CD4-positive, alpha-beta memory T cell (primary cell): ENCODE measurements at regions of chr10 and their contacts with region 1.

Region 1: DNA sequence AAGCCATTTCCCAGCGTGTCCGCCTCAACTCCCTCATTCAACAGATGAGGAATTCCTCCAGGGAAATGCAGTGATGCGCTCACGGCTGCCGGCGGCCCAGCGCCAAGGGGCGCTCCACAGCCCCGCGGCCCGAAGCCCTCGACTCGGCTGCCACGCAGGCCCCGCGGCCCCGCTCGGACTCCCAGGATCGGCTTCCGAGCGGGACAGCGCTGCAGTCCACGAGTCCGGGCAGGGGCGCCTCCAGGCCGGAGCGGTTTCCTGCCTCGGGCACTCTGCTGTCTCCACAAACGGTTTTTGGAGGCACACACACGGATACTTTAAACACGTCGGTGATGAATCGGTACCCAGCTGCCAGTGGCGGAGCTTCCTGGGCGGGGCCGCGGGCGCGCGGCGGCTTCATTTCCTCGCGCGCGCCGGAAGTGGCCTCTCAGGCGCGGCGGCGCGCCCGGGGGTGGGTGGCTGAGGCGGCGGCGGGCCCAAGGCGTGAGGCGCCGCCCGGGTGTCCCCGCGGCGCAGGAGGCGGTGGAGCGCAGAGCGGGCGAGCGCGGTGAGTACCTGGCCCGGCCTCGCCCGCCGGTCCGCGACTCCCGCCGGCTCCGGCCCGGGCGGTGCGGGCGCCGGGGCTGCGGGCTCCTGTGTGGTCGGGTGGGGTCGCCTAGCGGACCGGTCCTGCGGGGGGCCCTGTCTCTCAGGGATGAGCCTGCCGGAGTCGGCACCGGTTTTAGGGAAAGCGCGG is at the start of gene CSGALNACT2:
- DNase-seq: peak; percentile 88 to 91 (median 90)
- H3K4me3 ChIP-seq: peak within 1 kb of the TSS; percentile 67 to 92
- H3K4me3 Mint-ChIP-seq: peak within 1 kb of the TSS; percentile 91 to 100 (median 98)
- H3K27ac ChIP-seq: peak within 1 kb of the TSS; percentile 89
- H3K27ac Mint-ChIP-seq: peak within 1 kb of the TSS; percentile 97 to 100 (median 99)
- H3K4me1 ChIP-seq: peaks cover 49% of the 10 kb centered on the region
- H3K4me1 Mint-ChIP-seq: peaks cover 33 to 56% (median 43%) of the 10 kb centered on the region in 4 donors
- H3K27me3 ChIP-seq: no peaks in the 10 kb centered on the region
- H3K27me3 Mint-ChIP-seq: no peaks in the 10 kb centered on the region
- total RNA-seq, gene CSGALNACT2: 45.3 to 48.2 TPM

Region 2: DNA sequence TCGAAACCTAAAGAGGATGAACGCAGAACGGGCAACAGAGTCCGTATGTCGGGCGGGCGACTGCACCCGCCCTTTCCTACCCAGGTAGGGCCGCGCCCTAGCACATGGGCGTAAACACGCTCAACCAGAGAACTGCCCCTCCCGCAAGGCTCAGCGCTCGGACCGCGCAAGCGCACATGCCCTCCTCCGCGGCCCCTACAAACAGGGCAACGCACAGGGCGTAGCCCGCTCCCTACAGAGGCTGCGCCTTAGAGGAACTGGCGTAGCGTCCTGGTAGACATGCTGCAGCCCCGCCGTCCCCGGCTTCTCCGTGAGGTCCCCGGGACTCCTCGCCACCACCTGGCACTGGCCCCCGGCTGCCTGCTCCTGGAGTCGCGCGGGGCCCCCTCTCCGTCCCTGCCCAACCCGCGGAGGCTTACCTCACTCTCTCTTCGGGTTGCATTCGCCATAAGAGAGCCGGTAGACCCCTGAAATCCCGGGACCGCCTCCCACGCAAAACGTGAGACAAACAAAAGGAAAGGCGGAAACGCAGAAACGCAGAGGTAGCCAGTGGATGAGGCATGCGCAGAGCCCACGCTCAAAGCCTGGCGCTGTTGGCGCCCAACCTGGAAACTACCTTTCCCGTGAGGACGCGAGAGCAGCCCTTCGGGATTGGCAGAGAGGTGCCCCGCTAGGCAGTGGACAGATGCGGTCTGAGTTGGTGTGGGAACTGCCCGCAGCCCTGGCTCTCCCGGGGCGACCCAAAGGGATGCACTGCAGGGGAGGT is 500.0 kb before region 1 on chr10 and contains the start of gene ZNF33B:
- CTCF ChIA-PET with region 1: no interaction called
- POLR2A ChIA-PET with region 1: interaction called, 3 read pairs
- intact Hi-C with region 1: loop called (anchors 2 kb)
- DNase-seq: peak; percentile 92 to 96 (median 95)
- H3K4me3 ChIP-seq: peak within 1 kb of the TSS; percentile 95 to 99
- H3K4me3 Mint-ChIP-seq: peak within 1 kb of the TSS; percentile 95 to 99 (median 98)
- H3K27ac ChIP-seq: peak within 1 kb of the TSS; percentile 84
- H3K27ac Mint-ChIP-seq: peak within 1 kb of the TSS; percentile 97 to 100 (median 98)
- H3K4me1 ChIP-seq: peaks cover 25% of the 10 kb centered on the region
- H3K4me1 Mint-ChIP-seq: peaks cover 24 to 53% (median 34%) of the 10 kb centered on the region in 4 donors
- H3K27me3 ChIP-seq: no peaks in the 10 kb centered on the region
- H3K27me3 Mint-ChIP-seq: no peaks in the 10 kb centered on the region
- total RNA-seq, gene ZNF33B: 71.3 to 76.4 TPM

Region 3: DNA sequence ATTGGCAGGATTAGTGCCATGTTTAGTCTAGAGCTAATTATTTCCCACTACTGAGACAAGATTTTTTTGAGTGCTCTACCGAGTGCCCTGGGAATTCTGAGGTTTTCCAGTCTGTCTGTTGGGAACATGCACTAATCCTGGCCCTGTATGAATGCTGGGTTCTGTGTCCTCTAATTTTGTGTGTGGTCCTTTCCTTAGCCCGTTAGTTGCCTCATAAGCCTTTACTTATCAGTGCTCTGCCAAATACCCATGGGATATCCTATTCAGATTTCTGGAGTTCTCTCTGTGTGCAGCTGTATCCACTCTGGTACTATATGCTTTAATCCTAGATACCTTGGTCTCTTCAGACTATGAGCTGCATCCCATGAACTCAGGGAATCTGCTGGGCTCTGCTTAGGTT is 13.2 kb after region 1 on chr10:
- CTCF ChIA-PET with region 1: no interaction called
- POLR2A ChIA-PET with region 1: interaction called, 28 read pairs
- intact Hi-C with region 1: no loop called
- DNase-seq: no peak
- H3K4me3 ChIP-seq: no peak overlapping the region
- H3K4me3 Mint-ChIP-seq: peak overlapping the region in 6 of 8 donors; percentile 17 to 64 (median 38)
- H3K27ac ChIP-seq: no peak overlapping the region
- H3K27ac Mint-ChIP-seq: peak overlapping the region in 3 of 7 donors; percentile 3 to 66 (median 31)
- H3K4me1 ChIP-seq: peaks cover 43% of the 10 kb centered on the region
- H3K4me1 Mint-ChIP-seq: peaks cover 43 to 74% (median 59%) of the 10 kb centered on the region in 4 donors
- H3K27me3 ChIP-seq: no peaks in the 10 kb centered on the region
- H3K27me3 Mint-ChIP-seq: no peaks in the 10 kb centered on the region

Region 4: DNA sequence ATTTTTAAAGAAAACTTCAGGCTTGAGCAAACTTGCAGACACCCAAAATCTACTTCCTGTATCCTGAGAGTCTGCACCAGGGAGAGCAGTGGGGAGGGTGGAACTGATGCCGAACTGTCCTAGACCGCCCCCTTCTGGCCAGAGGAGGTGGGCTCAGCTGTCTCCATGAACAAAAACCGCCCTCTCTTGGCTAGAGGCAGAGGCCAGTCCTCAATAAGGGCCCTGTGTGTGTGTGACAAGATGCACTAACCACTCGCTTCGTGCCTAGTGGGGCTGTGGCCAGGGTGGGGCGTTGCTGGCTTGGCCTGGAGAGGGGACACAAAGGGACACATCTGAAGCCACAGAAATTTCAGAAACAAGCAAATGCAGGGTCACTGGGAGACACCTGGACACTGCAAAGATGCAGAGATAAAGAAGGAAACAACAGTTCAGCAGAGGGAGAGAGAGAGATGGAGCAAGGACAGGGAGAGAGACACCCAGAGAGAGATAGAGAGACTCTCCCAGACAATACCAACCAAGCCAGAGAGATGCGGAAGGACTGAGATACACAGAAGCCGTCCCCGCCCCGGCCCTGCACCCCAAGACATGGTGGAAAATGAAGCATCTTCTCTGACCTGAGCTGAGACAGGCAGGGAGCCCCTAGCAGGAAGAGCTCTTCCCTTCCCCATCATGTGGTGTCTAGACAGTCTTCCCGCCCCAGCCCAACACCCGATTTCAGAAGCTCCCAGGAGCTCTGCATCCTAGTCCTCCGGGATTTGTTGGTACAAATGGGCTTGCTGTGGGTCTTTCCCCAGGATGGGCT is 210.5 kb after region 1 on chr10:
- CTCF ChIA-PET with region 1: interaction called, 4 read pairs
- POLR2A ChIA-PET with region 1: no interaction called
- intact Hi-C with region 1: loop called (anchors 5 kb)
- DNase-seq: peak; percentile 85 to 87 (median 86)
- H3K4me3 ChIP-seq: no peak overlapping the region
- H3K4me3 Mint-ChIP-seq: peak overlapping the region in 3 of 8 donors; percentile 27 to 50 (median 31)
- H3K27ac ChIP-seq: no peak overlapping the region
- H3K27ac Mint-ChIP-seq: peak overlapping the region in 6 of 7 donors; percentile 36 to 83 (median 57)
- H3K4me1 ChIP-seq: peaks cover 20% of the 10 kb centered on the region
- H3K4me1 Mint-ChIP-seq: peaks cover 16 to 30% (median 23%) of the 10 kb centered on the region in 4 donors
- H3K27me3 ChIP-seq: no peaks in the 10 kb centered on the region
- H3K27me3 Mint-ChIP-seq: peaks cover 6 to 7% of the 10 kb centered on the region in 2 donors

Region 5: GRCh38 chr10:43407576-43408330 is 269.6 kb after region 1 on chr10:
- CTCF ChIA-PET with region 1: no interaction called
- POLR2A ChIA-PET with region 1: interaction called, 13 read pairs
- intact Hi-C with region 1: loop called (anchors 2 kb)
- DNase-seq: peak; percentile 81 to 89 (median 84)
- H3K4me3 ChIP-seq: peak overlapping the region; percentile 83 to 85
- H3K4me3 Mint-ChIP-seq: peak overlapping the region; percentile 94 to 100 (median 98)
- H3K27ac ChIP-seq: peak overlapping the region; percentile 100
- H3K27ac Mint-ChIP-seq: peak overlapping the region; percentile 93 to 100 (median 99)
- H3K4me1 ChIP-seq: peaks cover 39% of the 10 kb centered on the region
- H3K4me1 Mint-ChIP-seq: peaks cover 18 to 53% (median 27%) of the 10 kb centered on the region in 4 donors
- H3K27me3 ChIP-seq: no peaks in the 10 kb centered on the region
- H3K27me3 Mint-ChIP-seq: no peaks in the 10 kb centered on the region

Region 6: DNA sequence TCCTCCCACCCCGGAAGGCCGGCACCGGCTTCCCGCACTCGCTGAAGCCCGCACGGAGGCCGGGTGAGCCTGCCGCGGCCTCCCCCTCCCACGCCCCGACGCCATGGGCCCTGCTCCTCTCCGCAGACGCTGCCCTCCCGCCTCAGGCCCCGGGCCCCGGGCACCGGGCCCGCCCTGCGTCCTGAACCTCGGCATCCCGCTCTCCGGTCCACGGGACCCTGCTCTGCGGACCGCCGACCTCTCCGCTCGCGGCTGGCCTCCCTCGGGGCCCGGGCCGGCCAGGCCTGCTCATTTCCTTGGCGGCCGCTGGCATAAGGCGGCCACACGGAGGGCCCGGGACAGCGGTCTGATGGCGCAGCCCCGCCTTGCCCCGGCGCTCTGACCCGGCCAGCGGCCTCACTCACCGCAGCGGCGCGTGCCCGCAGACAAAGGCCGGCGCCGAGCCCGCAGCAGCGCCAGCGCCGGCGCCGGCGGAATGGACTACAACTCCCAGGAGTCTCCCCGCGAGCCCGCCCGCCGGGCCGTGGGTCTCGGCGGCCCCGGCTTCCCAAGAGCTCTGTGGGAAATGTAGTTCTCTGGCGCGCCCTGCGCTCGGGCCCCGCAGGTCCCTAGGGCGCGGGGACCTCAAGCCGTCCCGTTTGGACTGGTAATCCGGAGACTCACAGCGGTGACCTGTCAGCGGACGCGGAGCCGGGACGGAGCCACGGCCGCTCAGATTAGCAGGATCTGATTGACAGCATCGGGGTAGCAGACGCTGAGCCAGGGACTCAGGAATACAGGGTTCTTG is 510.4 kb after region 1 on chr10 and contains the start of gene ZNF32:
- CTCF ChIA-PET with region 1: no interaction called
- POLR2A ChIA-PET with region 1: no interaction called
- intact Hi-C with region 1: loop called (anchors 1 kb)
- DNase-seq: peak; percentile 80 to 83 (median 82)
- H3K4me3 ChIP-seq: peak within 1 kb of the TSS; percentile 66 to 78
- H3K4me3 Mint-ChIP-seq: peak within 1 kb of the TSS; percentile 93 to 98 (median 94)
- H3K27ac ChIP-seq: peak within 1 kb of the TSS; percentile 76
- H3K27ac Mint-ChIP-seq: peak within 1 kb of the TSS; percentile 84 to 96 (median 93)
- H3K4me1 ChIP-seq: peaks cover 18% of the 10 kb centered on the region
- H3K4me1 Mint-ChIP-seq: peaks cover 11 to 38% (median 18%) of the 10 kb centered on the region in 4 donors
- H3K27me3 ChIP-seq: no peaks in the 10 kb centered on the region
- H3K27me3 Mint-ChIP-seq: peaks cover 4 to 6% of the 10 kb centered on the region in 2 donors
- total RNA-seq, gene ZNF32: 35.5 to 39.5 TPM